Breast epithelium (tissue), 4 donors: ENCODE measurements at regions of chr1 and their contacts with region 1.

Region 1: GRCh38 chr1:14173598-14173997 is 424.9 kb upstream of the KAZN start:
- DNase-seq: no peak
- H3K4me3 ChIP-seq: no peak overlapping the region
- H3K27ac ChIP-seq: no peak overlapping the region
- H3K4me1 ChIP-seq: no peaks in the 10 kb centered on the region
- H3K27me3 ChIP-seq: no peaks in the 10 kb centered on the region
- CTCF ChIP-seq: no peak
- POLR2A ChIP-seq: no peak

Region 2: DNA sequence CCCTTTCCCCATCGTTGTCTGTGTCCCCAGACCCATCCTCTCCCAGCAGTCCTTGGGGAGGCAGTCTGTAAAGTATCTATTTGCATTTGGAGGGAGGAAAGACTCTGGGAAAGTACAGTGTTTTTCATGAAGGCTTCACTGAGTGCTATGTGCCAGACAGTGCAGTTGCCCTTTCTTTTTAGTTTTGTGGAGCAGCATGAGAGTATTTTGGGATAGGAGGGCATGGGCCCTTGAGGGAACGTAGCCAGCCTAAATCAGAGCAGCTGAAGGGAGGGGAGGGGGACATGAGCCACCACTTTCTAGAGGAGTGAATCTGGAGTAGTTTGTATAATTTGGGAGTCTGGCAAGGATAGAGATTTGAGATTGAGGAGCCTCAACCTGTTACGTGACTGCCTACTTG is 20.9 kb after region 1 on chr1:
- intact Hi-C with region 1: no loop called
- DNase-seq: no peak
- H3K4me3 ChIP-seq: no peak overlapping the region
- H3K27ac ChIP-seq: no peak overlapping the region
- H3K4me1 ChIP-seq: no peaks in the 10 kb centered on the region
- H3K27me3 ChIP-seq: no peaks in the 10 kb centered on the region
- CTCF ChIP-seq: no peak
- POLR2A ChIP-seq: no peak

Region 3: DNA sequence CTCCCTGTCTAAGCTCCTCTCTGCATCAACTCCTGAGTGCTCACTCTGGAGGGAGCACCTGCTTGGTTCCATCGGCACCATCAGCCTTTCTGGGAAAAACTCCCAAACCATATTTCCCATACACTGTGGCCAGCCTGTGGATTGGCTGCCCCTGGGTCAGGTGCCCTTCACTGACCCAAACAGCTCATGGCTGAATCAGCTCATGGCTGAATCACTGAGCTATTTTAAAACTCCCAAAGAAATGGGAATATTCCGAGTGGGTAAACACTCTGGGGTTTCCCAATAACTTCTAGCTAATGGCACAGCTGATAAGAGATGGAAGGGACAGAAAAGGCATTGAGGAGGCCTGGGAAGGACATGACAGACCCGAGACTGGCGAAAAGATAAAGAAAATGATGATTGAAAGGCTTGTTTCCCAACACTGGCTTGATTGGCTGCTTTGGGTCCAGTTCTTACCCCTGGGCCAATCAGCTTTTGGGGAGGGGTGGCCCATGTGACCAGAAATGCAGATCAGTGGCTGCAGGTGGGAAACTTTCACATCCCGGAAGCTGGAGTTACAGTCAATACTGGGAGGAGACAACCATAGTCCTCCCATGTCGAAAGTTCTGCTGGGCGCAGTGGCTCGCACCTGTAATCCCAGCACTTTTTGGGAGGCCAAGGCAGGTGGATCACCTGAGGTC is 387.6 kb after region 1 on chr1:
- intact Hi-C with region 1: loop called (anchors 5 kb)
- DNase-seq: no peak
- H3K4me3 ChIP-seq: no peak overlapping the region
- H3K27ac ChIP-seq: no peak overlapping the region
- H3K4me1 ChIP-seq: no peaks in the 10 kb centered on the region
- H3K27me3 ChIP-seq: no peaks in the 10 kb centered on the region
- CTCF ChIP-seq: no peak
- POLR2A ChIP-seq: no peak